ENCODE measurements at regions of chr1 and their contacts with region 1.

Region 1: DNA sequence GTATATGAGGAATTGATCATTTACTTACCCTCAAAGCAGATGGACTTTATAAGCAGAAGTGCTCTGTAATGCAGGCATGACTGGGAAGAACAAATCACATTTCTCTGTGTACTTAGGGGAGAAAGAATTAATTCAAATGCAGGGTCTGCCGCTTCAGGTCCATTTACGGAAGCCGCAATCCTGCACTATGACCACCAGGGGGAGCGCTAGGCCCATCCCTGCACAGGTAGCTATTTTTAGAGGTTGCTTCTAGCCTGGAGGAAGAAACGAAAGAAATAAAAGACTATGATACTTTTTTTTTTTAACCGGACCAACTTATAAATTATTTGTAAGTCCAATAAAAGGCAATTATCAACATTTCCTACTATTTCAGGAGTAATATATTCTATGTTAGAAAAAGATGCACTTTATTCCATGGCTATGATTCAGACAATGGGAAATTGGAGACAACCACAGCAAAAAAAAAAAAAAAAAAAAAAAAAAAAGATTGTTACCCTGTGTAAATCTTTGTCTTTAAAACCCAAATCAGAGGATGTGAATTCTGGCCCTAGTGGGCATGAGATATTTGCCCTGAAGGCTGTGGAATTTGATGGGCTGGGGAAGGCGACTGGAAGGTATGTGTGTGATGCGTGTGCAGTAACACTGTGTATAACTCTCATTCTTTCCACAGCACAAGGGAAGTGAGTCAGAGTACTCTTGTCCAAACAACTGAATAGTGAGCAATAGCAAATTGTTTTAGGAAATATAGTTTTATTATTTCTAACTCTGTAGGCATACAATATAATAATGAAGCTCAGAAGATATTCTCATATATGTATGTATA is 12.9 kb upstream of the FYB2 start:
- DNase-seq: peak; percentile 44 to 60
- ATAC-seq: peak; percentile 48 to 87 (median 76)
- H3K4me3 ChIP-seq: peak overlapping the region in 2 of 10 donors; percentile 11 to 21
- H3K27ac ChIP-seq: no peak overlapping the region
- H3K4me1 ChIP-seq: peaks cover 0 to 5% (median 0%) of the 10 kb centered on the region in 9 donors
- H3K27me3 ChIP-seq: peaks cover 0 to 14% (median 0%) of the 10 kb centered on the region in 7 donors
- CTCF ChIP-seq: peak; percentile 90 to 99 (median 96)

Region 2: GRCh38 chr1:56788588-56788987 is 43.5 kb before region 1 on chr1:
- intact Hi-C with region 1: no loop called
- DNase-seq: peak; percentile 31 to 49
- ATAC-seq: peak; percentile 51 to 87 (median 76)
- H3K4me3 ChIP-seq: no peak overlapping the region
- H3K27ac ChIP-seq: peak overlapping the region in 4 of 10 donors; percentile 1 to 52 (median 42)
- H3K4me1 ChIP-seq: peaks cover 0 to 18% (median 10%) of the 10 kb centered on the region in 9 donors
- H3K27me3 ChIP-seq: no peaks in the 10 kb centered on the region
- CTCF ChIP-seq: no peak

Region 3: DNA sequence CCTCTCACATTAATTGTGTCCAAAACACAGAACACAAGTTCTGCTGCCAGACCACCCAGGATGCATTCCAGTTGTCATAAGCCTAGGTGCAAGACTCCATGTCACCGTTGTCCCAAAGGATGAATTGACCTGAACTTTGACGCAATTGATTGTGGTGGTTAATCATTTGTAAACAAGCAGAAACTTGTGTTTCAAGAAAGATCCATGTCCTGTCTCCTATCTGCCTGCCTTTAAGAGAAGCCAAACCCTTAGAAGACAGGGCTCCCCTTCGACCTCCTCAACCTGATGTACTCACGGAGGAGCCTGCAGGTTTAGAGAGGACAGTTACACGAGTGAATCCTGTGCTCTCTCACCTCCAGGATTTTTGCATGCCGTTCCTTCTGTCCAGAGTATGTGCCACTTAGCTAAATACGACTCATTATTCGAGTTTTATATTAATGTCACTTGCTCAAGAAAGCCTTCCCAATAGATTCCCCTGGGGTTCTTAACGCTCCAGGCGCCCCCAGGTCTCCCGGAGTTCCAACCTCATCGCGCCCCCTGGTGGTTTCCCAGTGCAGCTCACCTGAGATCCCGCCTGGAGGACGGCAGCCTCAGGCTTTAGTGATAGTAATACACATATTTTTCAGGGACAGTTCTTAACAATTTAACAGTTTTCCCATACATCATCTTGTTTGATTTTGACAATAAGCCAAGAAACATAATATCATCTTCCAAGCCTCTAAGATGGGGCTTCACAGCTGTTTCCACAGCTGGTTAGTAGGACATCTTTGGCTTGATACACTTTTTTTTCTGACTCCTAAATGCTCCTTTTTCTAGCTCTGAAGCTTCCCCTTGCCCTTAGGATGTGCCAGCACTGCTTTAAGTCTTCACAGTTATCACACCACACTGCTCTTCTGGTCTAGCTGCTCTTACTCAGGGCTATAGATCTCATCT is 136.1 kb after region 1 on chr1:
- intact Hi-C with region 1: loop called in 3 of 10 experiments (anchors 5 to 10 kb)
- DNase-seq: peak; percentile 9 to 23
- ATAC-seq: no peak
- H3K4me3 ChIP-seq: no peak overlapping the region
- H3K27ac ChIP-seq: no peak overlapping the region
- H3K4me1 ChIP-seq: no peaks in the 10 kb centered on the region
- H3K27me3 ChIP-seq: peaks cover 0 to 3% (median 0%) of the 10 kb centered on the region in 7 donors
- CTCF ChIP-seq: peak in 7 of 9 donors; percentile 39 to 60 (median 46)

Region 4: GRCh38 chr1:57329937-57330336 is 497.9 kb after region 1 on chr1:
- intact Hi-C with region 1: loop called in 1 of 10 experiments (anchors 10 kb)
- DNase-seq: no peak
- ATAC-seq: no peak
- H3K4me3 ChIP-seq: no peak overlapping the region
- H3K27ac ChIP-seq: no peak overlapping the region
- H3K4me1 ChIP-seq: peaks cover 0 to 15% (median 7%) of the 10 kb centered on the region in 9 donors
- H3K27me3 ChIP-seq: no peaks in the 10 kb centered on the region
- CTCF ChIP-seq: no peak

Region 5: DNA sequence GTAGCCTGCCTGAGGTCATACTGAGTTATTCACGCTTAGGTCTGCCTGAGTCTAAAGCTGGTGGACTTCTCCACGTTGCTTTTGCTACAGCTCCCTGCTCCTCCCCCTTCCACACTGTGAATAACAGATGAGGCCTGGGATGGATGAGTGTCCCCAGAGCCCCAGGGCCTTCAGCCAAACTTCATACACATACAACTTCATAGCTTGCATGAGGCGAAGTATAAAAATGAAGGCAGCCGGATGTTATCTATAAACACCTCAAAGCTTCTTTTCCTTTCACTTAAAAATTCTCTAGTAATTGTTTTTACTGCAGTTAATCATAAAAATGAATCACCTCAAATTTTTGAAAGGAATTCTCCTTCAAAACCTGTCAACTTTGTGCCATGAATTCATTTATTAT is 521.6 kb after region 1 on chr1:
- intact Hi-C with region 1: loop called in 5 of 10 experiments (anchors 10 kb)
- DNase-seq: no peak
- ATAC-seq: peak in 2 of 8 donors; percentile 31 to 57
- H3K4me3 ChIP-seq: no peak overlapping the region
- H3K27ac ChIP-seq: no peak overlapping the region
- H3K4me1 ChIP-seq: peaks cover 0 to 30% (median 14%) of the 10 kb centered on the region in 9 donors
- H3K27me3 ChIP-seq: no peaks in the 10 kb centered on the region
- CTCF ChIP-seq: no peak

Region 6: DNA sequence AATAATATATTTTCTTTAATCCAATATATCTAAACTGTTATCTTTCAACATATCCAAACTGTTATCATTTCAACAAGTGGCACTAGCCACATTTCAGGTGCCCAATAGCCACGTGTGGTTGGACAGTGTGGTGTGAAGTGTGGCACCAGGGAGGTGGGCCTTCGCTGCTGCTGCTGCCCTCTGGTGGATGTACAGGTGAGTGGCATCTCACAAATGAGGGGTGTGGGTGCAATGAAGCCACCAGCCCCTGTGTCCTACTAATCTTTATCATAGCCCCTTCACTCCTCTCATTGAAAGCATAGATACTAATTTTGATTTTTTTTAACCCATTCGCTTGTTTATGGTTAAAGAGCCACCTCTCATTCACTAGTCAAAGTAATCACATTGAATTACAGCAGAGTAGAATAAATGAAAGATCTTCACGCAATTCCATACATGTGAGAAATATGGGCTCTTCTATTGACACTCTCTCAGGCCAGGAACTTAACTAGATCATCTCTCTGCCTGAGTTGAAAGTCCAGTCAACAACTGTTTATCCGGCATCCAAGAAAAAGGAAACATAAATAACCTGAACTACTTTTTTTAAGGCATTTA is 1215.3 kb after region 1 on chr1:
- intact Hi-C with region 1: loop called (anchors 5 to 10 kb)
- DNase-seq: peak; percentile 9 to 27
- ATAC-seq: peak in 2 of 8 donors; percentile 50 to 53
- H3K4me3 ChIP-seq: no peak overlapping the region
- H3K27ac ChIP-seq: no peak overlapping the region
- H3K4me1 ChIP-seq: no peaks in the 10 kb centered on the region
- H3K27me3 ChIP-seq: no peaks in the 10 kb centered on the region
- CTCF ChIP-seq: peak; percentile 22 to 76 (median 68)

Region 7: DNA sequence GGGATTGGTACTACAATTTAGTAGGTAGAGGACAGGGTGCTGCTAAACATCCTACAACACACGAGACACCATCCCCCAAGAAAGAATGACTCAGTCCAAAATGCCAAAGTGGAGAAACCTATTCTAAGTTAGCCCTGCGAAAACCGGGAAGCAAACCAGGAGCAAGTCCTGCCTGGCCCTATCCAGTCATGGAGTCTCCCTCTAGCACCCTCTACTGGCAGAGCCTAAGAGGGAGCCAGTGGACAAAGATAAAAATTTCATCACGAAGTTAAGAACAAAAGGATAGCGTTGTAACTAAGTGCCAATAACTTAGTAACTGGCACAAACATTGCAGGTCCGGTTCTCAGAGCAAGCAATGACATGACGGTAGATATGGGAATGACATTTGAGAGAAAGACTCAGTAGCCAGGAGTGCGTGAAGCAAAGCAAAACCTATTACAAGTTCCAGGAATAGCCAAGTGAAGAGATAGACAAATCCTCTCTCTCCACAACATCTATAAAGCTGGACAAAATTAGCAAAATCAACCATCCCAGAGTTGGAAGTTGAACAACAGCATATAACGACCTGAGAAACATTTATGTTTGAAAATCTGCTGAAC is 1331.0 kb after region 1 on chr1:
- intact Hi-C with region 1: loop called in 7 of 10 experiments (anchors 5 to 10 kb)
- DNase-seq: peak; percentile 16 to 73
- ATAC-seq: peak; percentile 76 to 95 (median 92)
- H3K4me3 ChIP-seq: no peak overlapping the region
- H3K27ac ChIP-seq: peak overlapping the region in 3 of 10 donors; percentile 36 to 52 (median 49)
- H3K4me1 ChIP-seq: peaks cover 0 to 9% (median 0%) of the 10 kb centered on the region in 9 donors
- H3K27me3 ChIP-seq: no peaks in the 10 kb centered on the region
- CTCF ChIP-seq: peak; percentile 67 to 90 (median 86)